ENCODE measurements at regions of chr13 and their contacts with region 1.

Region 1: GRCh38 chr13:93932901-93933300 is 546.6 kb downstream of the DCT start:
- DNase-seq: no peak
- H3K4me3 ChIP-seq: no peak overlapping the region
- H3K27ac ChIP-seq: no peak overlapping the region
- H3K4me1 ChIP-seq: no peaks in the 10 kb centered on the region
- H3K27me3 ChIP-seq: no peaks in the 10 kb centered on the region
- CTCF ChIP-seq: no peak
- POLR2A ChIP-seq: no peak

Region 2: GRCh38 chr13:95579303-95579702 is 1646.4 kb after region 1 on chr13:
- intact Hi-C with region 1: loop called (anchors 10 kb)
- DNase-seq: no peak
- H3K4me3 ChIP-seq: no peak overlapping the region
- H3K27ac ChIP-seq: no peak overlapping the region
- H3K4me1 ChIP-seq: no peaks in the 10 kb centered on the region
- H3K27me3 ChIP-seq: no peaks in the 10 kb centered on the region
- CTCF ChIP-seq: no peak
- POLR2A ChIP-seq: no peak

Measured in vagina (tissue), 2 donors.